A673 (cell line): ENCODE measurements at regions of chr20 and their contacts with region 1.

Region 1: GRCh38 chr20:60057123-60057801 is 99.0 kb downstream of the CDH26 start:
- DNase-seq: peak; percentile 86
- H3K4me3 ChIP-seq: no peak overlapping the region
- H3K27ac ChIP-seq: peak overlapping the region; percentile 97
- H3K4me1 ChIP-seq: peaks cover 33% of the 10 kb centered on the region
- H3K27me3 ChIP-seq: no peaks in the 10 kb centered on the region
- CTCF ChIP-seq: peak; percentile 94

Region 2: GRCh38 chr20:60069656-60070055 is 12.4 kb after region 1 on chr20:
- CTCF ChIA-PET with region 1: interaction called, 10 read pairs
- POLR2A ChIA-PET with region 1: interaction called, 4 read pairs
- intact Hi-C with region 1: no loop called
- DNase-seq: peak; percentile 93
- H3K4me3 ChIP-seq: peak overlapping the region; percentile 22
- H3K27ac ChIP-seq: peak overlapping the region; percentile 90
- H3K4me1 ChIP-seq: peaks cover 34% of the 10 kb centered on the region
- H3K27me3 ChIP-seq: no peaks in the 10 kb centered on the region
- CTCF ChIP-seq: no peak

Region 3: DNA sequence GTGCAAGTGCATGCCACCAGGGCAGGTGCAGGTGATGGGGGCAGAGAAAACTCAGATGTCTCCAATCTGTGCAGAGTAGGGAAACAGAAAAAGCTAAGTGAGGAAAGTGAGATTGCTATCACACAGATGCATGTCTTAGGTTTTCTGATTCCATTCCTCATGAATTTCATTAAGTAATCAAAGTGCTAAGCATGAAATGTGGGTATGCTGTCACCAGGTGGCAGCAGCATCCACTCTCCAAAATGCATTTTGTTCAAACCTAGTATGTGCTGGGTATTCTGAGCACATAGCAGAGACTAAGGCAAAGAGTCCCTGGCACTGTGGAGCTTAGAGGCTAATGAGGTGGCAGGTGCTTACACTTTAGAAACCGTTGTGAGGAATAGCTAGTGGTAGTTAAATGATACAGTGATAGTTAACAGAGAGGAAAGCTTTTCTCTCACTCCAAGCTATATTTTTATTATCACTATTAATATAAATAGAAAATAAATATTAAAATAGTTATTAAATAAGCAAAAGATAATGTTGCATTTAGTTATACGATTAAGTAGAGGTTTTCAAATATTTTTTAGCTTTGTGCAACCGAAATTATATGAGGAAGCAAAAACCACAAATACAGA is 80.5 kb after region 1 on chr20:
- CTCF ChIA-PET with region 1: interaction called, 7 read pairs
- POLR2A ChIA-PET with region 1: no interaction called
- intact Hi-C with region 1: loop called (anchors 2 kb)
- DNase-seq: peak; percentile 80
- H3K4me3 ChIP-seq: peak overlapping the region; percentile 57
- H3K27ac ChIP-seq: peak overlapping the region; percentile 38
- H3K4me1 ChIP-seq: peaks cover 9% of the 10 kb centered on the region
- H3K27me3 ChIP-seq: no peaks in the 10 kb centered on the region
- CTCF ChIP-seq: peak; percentile 73

Region 4: DNA sequence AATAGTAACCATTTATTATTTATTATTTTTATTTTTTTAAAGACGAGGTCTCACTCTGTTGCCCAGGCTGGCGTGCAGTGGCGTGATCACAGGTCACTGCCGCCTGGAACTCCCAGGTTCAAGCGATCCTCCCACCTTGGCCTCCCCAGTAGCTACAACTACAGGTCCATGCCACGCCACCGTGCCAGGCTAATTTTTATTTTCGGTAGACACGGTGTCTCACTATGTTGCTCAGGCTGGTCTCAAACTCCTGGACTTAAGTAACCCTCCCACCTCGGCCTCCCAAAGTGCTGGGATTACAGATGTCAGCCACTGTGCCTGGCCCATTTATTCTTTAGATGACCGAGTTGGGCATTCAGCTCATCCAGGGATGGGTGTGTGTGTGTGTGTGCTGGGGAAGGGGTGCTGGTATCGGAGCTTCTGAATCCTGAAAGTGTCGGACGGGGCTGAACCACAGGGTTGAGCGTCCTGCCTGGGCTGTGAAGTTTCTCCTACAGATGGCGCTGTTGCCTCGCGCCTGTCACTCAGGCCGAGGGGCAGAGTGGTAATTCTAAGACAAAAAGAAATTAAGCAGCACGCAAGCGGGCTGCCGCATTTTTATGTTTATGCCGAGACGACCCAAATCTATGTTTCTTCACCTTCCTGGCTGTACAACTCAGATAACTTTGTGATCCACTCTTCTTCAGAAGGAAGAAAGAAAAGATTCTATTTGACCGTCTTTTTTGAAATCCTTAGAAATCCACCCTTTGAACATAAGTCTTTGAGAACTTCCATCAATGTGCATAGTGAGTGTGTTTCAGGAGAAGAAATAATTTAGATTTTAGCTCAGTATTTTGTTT is 153.7 kb after region 1 on chr20:
- CTCF ChIA-PET with region 1: interaction called, 11 read pairs
- POLR2A ChIA-PET with region 1: no interaction called
- intact Hi-C with region 1: loop called (anchors 2 kb)
- DNase-seq: peak; percentile 60
- H3K4me3 ChIP-seq: no peak overlapping the region
- H3K27ac ChIP-seq: no peak overlapping the region
- H3K4me1 ChIP-seq: no peaks in the 10 kb centered on the region
- H3K27me3 ChIP-seq: no peaks in the 10 kb centered on the region
- CTCF ChIP-seq: peak; percentile 89

Region 5: DNA sequence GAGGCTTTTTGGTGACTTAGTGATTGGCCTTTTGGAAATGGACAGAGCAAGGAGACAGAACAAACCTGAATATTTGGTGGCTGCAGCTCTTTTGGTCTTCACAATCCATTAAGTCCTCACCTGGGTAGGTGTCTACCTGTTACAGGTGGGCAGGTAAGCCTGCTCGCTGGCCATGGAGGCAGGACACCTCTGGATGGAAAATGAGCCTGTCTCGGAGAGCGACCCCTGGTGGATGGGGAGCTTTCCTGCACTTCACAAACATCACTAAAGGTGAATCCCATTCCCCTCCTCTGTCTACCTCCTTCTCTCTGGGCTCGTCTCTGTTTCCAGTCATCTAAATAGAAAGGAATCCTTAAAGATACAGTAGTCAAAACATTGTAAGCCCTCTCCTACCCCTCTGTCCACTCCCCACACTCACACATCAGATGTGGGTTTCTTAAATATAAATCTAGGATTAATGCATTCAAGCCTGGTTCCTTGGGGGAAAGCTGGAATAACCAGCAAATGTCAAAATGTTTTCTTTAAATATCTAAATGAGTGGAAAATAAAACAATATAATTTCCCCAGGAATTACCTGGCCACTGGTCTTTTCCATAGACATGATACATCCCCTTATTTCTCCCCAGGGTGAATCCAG is 205.8 kb after region 1 on chr20:
- CTCF ChIA-PET with region 1: interaction called, 3 read pairs
- POLR2A ChIA-PET with region 1: no interaction called
- intact Hi-C with region 1: loop called (anchors 1 kb)
- DNase-seq: peak; percentile 47
- H3K4me3 ChIP-seq: no peak overlapping the region
- H3K27ac ChIP-seq: no peak overlapping the region
- H3K4me1 ChIP-seq: no peaks in the 10 kb centered on the region
- H3K27me3 ChIP-seq: peaks cover 25% of the 10 kb centered on the region
- CTCF ChIP-seq: peak; percentile 87

Region 6: GRCh38 chr20:61120595-61121515 is 1063.6 kb after region 1 on chr20:
- CTCF ChIA-PET with region 1: no interaction called
- POLR2A ChIA-PET with region 1: no interaction called
- intact Hi-C with region 1: loop called (anchors 5 kb)
- DNase-seq: peak; percentile 87
- H3K4me3 ChIP-seq: no peak overlapping the region
- H3K27ac ChIP-seq: no peak overlapping the region
- H3K4me1 ChIP-seq: no peaks in the 10 kb centered on the region
- H3K27me3 ChIP-seq: peaks cover 25% of the 10 kb centered on the region
- CTCF ChIP-seq: peak; percentile 73

Region 7: GRCh38 chr20:61886721-61887594 is 1829.7 kb after region 1 on chr20:
- CTCF ChIA-PET with region 1: interaction called, 4 read pairs
- POLR2A ChIA-PET with region 1: no interaction called
- intact Hi-C with region 1: loop called (anchors 5 kb)
- DNase-seq: peak; percentile 74
- H3K4me3 ChIP-seq: no peak overlapping the region
- H3K27ac ChIP-seq: no peak overlapping the region
- H3K4me1 ChIP-seq: no peaks in the 10 kb centered on the region
- H3K27me3 ChIP-seq: peaks cover 4% of the 10 kb centered on the region
- CTCF ChIP-seq: peak; percentile 95